H1 (cell line): ENCODE measurements at regions of chr12 and their contacts with region 1.

Region 1: DNA sequence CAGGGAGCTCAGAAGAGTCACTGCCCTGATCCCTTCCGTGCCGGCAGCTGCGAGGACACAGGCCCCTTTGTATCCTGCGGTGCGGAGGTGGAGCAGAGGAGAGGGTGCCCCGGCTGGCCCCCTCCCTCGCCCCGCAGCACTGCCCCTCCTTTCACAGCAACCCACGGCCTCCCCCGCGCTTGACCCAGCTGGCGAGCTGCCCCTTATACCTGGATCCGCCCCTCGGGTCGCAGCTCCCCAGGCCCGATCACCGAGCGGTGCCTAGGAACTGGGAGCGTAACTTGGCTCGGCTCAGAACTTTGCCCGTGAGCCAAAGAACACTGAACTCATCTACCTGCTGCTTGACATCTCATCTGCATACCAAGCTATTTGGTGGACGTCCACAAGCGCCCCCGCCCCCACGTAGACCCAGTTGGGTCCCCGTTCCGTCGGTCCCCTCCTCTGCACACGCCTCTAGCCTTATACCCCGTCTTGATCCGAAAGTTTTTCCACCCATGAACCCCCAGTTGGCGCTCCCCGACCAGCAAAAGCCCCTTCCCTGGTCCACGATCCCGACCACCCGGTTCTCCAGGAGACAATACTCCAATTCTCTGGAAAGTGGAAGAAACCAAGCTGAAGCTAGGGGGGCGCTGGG is 697 bp upstream of the DNAJC14 start:
- DNase-seq: peak in 1 of 2 experiments; percentile 84
- H3K4me3 ChIP-seq: peak overlapping the region; percentile 59 to 97 (median 86)
- H3K27ac ChIP-seq: peak overlapping the region; percentile 92
- H3K4me1 ChIP-seq: peaks cover 1 to 16% (median 6%) of the 10 kb centered on the region in 4 experiments
- H3K27me3 ChIP-seq: no peaks in the 10 kb centered on the region
- CTCF ChIP-seq: 0 out of 4 replicates have a peak, but pooled peaks of 1 of the 3 experiments have one; percentile 2
- EP300 ChIP-seq: no peak
- POLR2A ChIP-seq: peak in 1 of 2 experiments; percentile 53; a peak in 1 of 3 replicates
- RAD21 ChIP-seq: peak in 1 of 2 experiments; percentile 39; a peak in 2 of 4 replicates

Region 2: DNA sequence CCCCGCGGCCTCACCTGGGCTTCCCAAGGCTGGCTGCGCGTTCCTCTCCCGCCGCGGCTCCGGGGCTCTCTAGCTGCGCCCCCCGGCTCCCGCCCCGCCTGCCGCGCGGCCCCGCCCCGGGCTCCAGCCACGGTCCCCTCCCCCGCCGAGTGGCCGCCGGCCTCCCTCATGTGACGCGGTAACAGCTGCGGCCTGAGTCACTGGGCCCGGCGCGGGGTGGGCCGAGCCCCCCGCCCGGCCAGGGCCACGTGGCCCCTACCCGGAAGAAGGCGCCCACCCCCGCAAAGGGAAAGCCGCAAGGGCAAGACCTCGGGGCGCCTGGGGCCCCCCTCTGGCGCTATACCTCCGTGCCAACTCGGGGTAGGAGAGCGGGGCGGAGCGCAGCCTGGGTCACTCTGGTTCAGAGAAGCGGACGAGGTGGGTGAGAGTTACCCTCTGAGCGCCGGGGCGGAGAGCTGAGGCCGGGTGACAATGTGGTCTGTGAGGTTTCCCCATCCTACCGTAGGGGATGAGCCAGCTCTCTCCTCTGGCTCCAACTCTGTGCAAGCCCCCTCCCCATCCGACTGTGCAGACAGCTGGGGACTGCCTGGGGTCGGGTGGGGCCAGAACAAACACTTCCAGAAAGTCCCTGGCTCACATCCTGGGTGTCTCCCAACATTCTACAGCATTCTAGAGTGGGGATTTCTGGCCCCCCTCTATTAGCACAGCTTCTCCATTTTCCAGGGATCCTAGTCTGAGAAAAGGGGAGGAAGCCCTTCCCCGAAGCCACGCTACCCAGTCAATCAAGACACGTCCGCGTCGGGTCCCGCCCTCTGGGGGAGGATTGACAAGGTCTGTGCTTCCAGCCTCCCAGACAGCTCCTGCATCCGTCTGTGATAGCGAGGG is 100.9 kb before region 1 on chr12 and contains the start of gene CD63:
- CTCF ChIA-PET with region 1: interaction called, 6 read pairs
- POLR2A ChIA-PET with region 1: interaction called, 10 read pairs
- DNase-seq: peak in 1 of 2 experiments; percentile 85
- H3K4me3 ChIP-seq: peak within 1 kb of the TSS; percentile 54 to 93 (median 90)
- H3K27ac ChIP-seq: peak within 1 kb of the TSS; percentile 68; the same call in 1 of the 2 replicates
- H3K4me1 ChIP-seq: peaks cover 0 to 12% (median 10%) of the 10 kb centered on the region in 4 experiments; a peak in 6 of 7 replicates
- H3K27me3 ChIP-seq: no peaks in the 10 kb centered on the region
- CTCF ChIP-seq: no peak
- EP300 ChIP-seq: 0 out of 3 replicates have a peak, but pooled peaks of 1 of the 2 experiments have one; percentile 7
- POLR2A ChIP-seq: peak; percentile 57 to 74; a peak in 2 of 3 replicates
- RAD21 ChIP-seq: no peak
- total RNA-seq, gene CD63: 440 and 460 TPM in 2 replicates

Region 3: DNA sequence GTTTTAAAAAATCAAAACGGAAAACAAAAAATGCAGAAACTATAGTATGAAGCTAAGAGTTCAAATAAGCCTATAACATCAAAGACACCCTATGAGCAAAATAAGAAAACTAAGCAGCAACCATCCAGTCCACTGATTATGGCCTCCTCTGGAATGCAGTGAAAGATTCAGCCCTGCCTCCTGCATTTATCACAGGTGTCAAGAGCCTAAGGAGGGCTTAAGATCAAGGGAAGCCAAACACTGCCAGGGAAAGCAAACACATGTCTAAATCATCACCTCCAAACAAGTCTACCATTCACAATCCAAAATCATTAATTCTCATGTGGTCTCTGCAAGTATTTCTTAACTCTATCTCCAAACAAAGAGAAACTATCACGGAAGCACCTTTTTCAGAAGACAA is 40.9 kb before region 1 on chr12:
- CTCF ChIA-PET with region 1: no interaction called
- POLR2A ChIA-PET with region 1: no interaction called
- DNase-seq: no peak
- H3K4me3 ChIP-seq: no peak overlapping the region
- H3K27ac ChIP-seq: no peak overlapping the region
- H3K4me1 ChIP-seq: no peaks in the 10 kb centered on the region
- H3K27me3 ChIP-seq: no peaks in the 10 kb centered on the region
- CTCF ChIP-seq: no peak
- EP300 ChIP-seq: no peak
- POLR2A ChIP-seq: no peak
- RAD21 ChIP-seq: no peak

Region 4: DNA sequence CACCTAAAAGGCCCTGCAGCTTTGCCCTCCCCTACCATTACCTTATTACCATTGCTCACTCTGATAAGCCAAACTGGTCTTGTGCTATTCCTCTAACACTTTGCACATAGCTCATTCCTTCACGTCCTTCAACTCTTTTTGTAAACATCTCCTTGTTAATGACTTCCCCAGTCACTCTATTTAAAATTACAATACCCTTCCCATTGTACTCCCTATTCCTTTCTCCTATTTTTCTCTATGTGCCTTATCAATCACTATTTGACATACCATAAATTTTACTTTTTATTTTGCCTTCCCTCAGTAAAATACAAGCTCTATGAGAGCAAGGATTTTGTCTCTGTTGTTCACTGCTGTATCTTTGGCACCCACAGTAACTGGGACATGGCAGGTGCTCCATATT is 18.0 kb before region 1 on chr12:
- CTCF ChIA-PET with region 1: interaction called, 59 read pairs
- POLR2A ChIA-PET with region 1: interaction called, 133 read pairs
- DNase-seq: no peak
- H3K4me3 ChIP-seq: no peak overlapping the region
- H3K27ac ChIP-seq: no peak overlapping the region
- H3K4me1 ChIP-seq: peaks cover 0 to 9% (median 4%) of the 10 kb centered on the region in 4 experiments; a peak in 5 of 7 replicates
- H3K27me3 ChIP-seq: no peaks in the 10 kb centered on the region
- CTCF ChIP-seq: no peak
- EP300 ChIP-seq: no peak
- POLR2A ChIP-seq: no peak
- RAD21 ChIP-seq: no peak

Region 5: DNA sequence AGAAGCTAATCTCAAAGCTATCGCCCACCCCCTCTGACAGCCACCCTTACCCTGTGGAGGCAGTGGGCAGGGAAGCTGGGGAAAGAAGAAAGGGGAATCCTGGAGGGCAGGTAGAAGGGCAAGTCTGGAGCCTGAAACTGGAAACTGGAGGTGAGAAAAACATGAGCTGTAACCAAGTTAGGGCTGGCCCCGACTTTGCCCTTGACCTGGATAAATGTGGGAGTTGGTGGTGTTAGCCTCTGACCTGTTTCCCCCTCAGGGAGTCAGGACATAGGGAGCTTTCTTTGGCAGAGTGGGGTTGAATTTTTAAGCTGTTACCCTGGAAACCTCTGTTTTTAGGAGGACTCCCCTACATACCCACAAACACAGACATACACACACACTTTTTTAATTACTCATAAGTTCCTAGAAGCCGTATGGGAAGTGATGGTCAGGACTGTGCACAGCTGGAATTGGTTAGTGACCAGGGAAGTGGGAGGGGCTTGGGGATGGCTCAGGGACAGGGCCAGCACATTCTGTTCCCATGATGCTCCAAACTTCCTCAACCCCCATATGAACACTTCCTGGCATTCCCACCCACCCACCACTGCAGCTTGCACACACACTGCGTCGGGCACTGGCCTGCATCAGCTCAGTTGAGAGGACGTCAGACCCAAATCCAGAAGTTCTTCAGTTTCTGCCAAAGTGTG is 17.7 kb after region 1 on chr12:
- CTCF ChIA-PET with region 1: interaction called, 6 read pairs
- POLR2A ChIA-PET with region 1: interaction called, 82 read pairs
- DNase-seq: no peak
- H3K4me3 ChIP-seq: no peak overlapping the region
- H3K27ac ChIP-seq: no peak overlapping the region
- H3K4me1 ChIP-seq: peaks cover 0 to 3% (median 0%) of the 10 kb centered on the region in 4 experiments; a peak in 1 of 7 replicates
- H3K27me3 ChIP-seq: no peaks in the 10 kb centered on the region
- CTCF ChIP-seq: no peak
- EP300 ChIP-seq: no peak
- POLR2A ChIP-seq: no peak
- RAD21 ChIP-seq: no peak

Region 6: GRCh38 chr12:55885113-55885512 is 55.0 kb after region 1 on chr12:
- CTCF ChIA-PET with region 1: interaction called, 9 read pairs
- POLR2A ChIA-PET with region 1: interaction called, 14 read pairs
- DNase-seq: no peak
- H3K4me3 ChIP-seq: no peak overlapping the region
- H3K27ac ChIP-seq: no peak overlapping the region
- H3K4me1 ChIP-seq: no peaks in the 10 kb centered on the region
- H3K27me3 ChIP-seq: no peaks in the 10 kb centered on the region
- CTCF ChIP-seq: no peak
- EP300 ChIP-seq: no peak
- POLR2A ChIP-seq: no peak
- RAD21 ChIP-seq: no peak

Region 7: GRCh38 chr12:55926738-55927587 is 96.9 kb after region 1 on chr12:
- CTCF ChIA-PET with region 1: interaction called, 30 read pairs
- POLR2A ChIA-PET with region 1: interaction called, 53 read pairs
- DNase-seq: peak; percentile 84 to 94
- H3K4me3 ChIP-seq: peak overlapping the region; percentile 90 to 100 (median 94)
- H3K27ac ChIP-seq: peak overlapping the region; percentile 84
- H3K4me1 ChIP-seq: peaks cover 8 to 19% (median 11%) of the 10 kb centered on the region in 4 experiments; a peak in 6 of 7 replicates
- H3K27me3 ChIP-seq: peaks cover 0 to 6% (median 1%) of the 10 kb centered on the region in 4 experiments; a peak in 2 of 7 replicates
- CTCF ChIP-seq: peak; percentile 51 to 66 (median 59)
- EP300 ChIP-seq: no peak
- POLR2A ChIP-seq: peak in 1 of 2 experiments; percentile 39; a peak in 2 of 3 replicates
- RAD21 ChIP-seq: peak; percentile 23 to 35; a peak in 3 of 4 replicates